Kidney (tissue), 22 donors: ENCODE measurements at regions of chr3 and their contacts with region 1.

Region 1: GRCh38 chr3:40580494-40581091 is 55.8 kb downstream of the ZNF621 start:
- DNase-seq: peak in 4 of 5 donors; percentile 78 to 90 (median 81)
- H3K4me3 ChIP-seq: no peak overlapping the region
- H3K27ac ChIP-seq: no peak overlapping the region
- H3K4me1 ChIP-seq: peaks cover 0 to 7% (median 0%) of the 10 kb centered on the region in 3 donors
- H3K27me3 ChIP-seq: no peaks in the 10 kb centered on the region
- CTCF ChIP-seq: peak; percentile 96

Region 2: DNA sequence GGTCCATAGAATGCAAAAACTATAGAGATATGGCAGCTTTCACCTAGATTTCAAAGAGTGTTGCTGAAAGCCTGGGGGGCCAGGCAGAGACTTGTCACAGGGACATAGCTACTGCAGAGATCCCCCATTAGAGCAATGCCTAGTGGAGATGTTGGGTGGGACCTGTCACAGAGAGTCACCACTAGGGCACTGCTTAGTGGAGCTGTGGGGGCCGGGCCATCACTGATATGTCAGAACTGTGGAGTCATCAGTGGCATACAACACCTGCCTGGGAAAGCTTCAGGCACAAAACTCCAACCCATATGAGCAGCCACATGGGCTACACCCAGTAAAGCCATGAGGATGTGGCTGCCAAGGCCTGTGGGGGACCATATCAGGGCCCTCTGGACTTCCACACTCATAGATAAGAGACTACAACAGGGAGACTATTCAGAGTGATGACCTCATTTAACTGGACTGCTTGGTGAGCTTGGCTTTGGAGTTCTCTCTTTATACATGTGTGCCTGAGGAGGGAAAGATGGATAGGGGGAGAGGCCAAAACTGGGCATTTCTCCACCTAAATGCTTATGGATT is 120.5 kb after region 1 on chr3:
- intact Hi-C with region 1: no loop called
- DNase-seq: no peak
- H3K4me3 ChIP-seq: no peak overlapping the region
- H3K27ac ChIP-seq: no peak overlapping the region
- H3K4me1 ChIP-seq: no peaks in the 10 kb centered on the region
- H3K27me3 ChIP-seq: no peaks in the 10 kb centered on the region
- CTCF ChIP-seq: no peak

Region 3: DNA sequence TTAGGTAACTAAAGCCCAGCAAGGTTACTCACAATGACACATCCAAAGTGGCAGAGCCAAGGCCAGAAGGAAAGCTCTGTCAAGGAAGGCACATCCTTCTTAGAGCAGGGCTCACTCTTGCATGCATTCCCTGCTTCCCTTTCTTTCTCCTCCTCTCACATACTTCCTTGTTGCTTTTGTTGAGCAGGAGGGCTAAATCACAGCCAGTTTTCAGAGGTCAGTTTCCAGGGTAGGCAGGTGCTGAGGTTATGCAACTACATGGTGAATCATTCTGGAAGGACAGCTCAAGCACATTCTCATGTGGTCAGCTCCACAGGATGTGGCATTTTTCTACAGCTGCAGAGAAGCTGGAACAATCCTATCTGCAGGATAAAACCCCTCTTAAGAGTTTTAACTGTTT is 219.8 kb after region 1 on chr3:
- intact Hi-C with region 1: no loop called
- DNase-seq: peak in 2 of 5 donors; percentile 17 to 30
- H3K4me3 ChIP-seq: no peak overlapping the region
- H3K27ac ChIP-seq: no peak overlapping the region
- H3K4me1 ChIP-seq: no peaks in the 10 kb centered on the region
- H3K27me3 ChIP-seq: no peaks in the 10 kb centered on the region
- CTCF ChIP-seq: no peak

Region 4: GRCh38 chr3:41881233-41881821 is 1300.7 kb after region 1 on chr3:
- intact Hi-C with region 1: loop called (anchors 5 kb)
- DNase-seq: peak in 2 of 5 donors; percentile 53 to 66
- H3K4me3 ChIP-seq: no peak overlapping the region
- H3K27ac ChIP-seq: no peak overlapping the region
- H3K4me1 ChIP-seq: no peaks in the 10 kb centered on the region
- H3K27me3 ChIP-seq: no peaks in the 10 kb centered on the region
- CTCF ChIP-seq: peak; percentile 73